ENCODE measurements at regions of chr20 and their contacts with region 1.

Region 1: DNA sequence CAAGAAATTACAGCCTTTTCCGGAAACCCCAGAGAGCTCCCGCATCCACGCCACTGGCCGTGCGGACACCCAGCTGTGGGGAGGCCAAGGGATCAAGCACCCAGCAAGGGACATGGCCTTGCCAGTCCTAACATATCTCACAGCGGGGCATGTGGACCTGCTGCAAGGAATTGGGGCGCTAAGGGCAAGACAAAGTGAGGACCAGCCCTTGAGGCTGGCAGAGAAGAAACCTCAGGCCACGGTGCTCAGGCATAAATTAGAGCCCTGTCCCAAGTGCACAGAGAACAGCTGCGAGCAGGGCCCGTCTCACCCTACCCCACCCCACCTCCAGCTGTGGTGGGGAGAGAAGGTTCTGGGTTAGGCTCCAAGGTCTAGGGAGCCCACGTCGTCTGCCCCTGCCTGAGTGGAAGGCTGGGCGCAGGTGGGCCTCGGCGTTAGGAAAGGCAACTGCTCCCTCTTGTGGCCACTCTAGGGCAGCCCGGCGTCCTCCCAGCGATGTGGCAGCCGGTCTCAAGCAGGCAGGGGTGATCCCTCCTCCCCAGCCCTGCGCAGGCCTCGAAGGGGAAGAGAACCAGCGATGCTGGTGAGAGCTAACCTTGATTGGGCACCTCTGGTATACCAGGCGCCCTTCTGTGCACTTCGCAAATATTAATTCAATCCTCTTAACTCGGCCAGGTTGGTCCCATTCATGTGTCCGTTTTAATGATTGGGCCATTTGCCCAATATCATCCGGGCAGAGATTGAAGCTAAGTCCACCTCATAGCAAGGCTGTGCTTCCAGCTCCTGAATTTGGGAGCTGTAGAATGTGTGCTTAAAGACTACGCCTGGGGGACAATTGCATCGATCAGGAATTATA is 235.8 kb downstream of the NFATC2 start:
- DNase-seq: peak; percentile 38 to 91 (median 76)
- ATAC-seq: peak; percentile 92 to 98 (median 98)
- H3K4me3 ChIP-seq: no peak overlapping the region
- H3K27ac ChIP-seq: no peak overlapping the region
- H3K4me1 ChIP-seq: no peaks in the 10 kb centered on the region
- H3K27me3 ChIP-seq: no peaks in the 10 kb centered on the region
- CTCF ChIP-seq: peak; percentile 84 to 93 (median 90)

Region 2: DNA sequence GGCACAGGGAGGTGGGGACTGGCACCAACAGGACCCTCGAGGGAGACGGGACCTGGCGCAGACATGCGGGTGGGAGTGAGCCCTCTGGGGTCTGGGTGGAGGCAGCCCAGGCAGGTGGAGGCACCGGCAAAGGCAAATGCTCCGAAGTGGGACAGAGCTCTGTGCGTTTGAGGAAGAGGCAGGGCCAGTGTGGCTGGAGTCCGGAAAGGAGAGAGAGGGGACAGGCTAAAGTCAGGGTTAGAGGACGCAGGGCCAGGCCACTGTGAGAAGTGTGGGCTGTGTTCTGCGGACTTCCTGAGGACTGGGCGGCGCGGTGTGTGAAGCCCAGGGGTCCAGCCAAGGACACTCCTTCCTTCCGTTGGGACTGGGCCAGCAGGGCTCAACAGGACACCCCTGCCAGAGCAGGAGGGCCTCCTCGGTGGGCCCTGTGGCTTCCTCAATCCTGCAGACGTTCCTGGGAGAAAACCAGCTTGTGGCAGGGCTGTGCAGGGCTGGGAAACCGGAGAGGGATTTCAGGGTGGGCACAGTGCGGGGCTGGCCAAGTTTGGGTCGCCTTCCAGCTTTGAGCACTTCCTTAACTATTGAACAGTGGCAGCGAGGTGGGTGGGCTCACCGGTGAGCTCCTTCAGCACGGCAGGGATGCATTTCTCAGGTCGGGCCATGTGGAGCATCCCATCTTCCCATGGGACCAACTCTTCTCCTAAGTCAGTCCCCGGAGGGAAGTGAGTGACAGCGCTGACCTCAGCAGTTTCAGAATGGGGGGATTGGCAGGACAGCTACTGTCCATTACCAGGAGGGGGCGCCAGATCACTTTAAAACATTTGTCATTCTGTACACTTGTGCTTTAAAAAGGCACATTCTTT is 325.6 kb before region 1 on chr20:
- intact Hi-C with region 1: loop called in 1 of 3 experiments (anchors 5 kb)
- DNase-seq: peak in 5 of 6 donors; percentile 16 to 65 (median 47)
- ATAC-seq: peak; percentile 28 to 77 (median 66)
- H3K4me3 ChIP-seq: no peak overlapping the region
- H3K27ac ChIP-seq: no peak overlapping the region
- H3K4me1 ChIP-seq: no peaks in the 10 kb centered on the region
- H3K27me3 ChIP-seq: no peaks in the 10 kb centered on the region
- CTCF ChIP-seq: peak; percentile 56 to 85 (median 64)

Region 3: DNA sequence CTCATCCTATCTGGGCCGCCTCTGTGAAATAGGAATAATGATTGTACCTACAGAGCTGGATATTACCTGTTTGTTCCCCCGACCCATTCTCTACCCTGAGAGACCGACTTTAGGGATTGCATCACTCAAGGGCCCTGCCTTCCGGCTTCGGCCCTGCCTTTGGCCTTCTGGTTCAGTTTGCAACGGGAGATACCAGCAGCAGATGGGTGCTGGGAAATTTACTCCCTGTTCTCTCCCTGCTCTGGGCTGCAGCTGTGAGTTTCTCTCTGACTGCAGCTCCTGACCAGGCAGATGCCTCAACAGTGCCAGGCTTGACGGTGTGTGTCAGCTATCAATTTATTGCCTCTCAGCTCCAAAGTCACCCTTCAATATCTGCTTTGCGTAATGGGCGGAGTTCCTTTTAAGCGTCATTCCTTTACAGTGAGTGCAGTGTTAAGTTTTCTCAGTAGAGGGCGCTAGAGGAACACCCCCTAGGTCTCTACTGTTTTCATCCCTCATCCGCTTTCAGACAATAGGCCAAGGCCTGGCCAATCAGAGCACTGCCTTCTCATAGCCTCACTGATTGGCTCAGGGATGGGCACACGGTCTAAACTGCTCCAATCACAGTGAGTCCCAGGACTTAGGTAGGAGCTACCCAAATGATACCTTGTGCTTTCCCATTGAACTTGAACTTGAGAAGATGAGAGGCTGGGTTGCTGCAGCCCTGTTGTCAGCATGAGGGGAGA is 313.8 kb before region 1 on chr20:
- intact Hi-C with region 1: loop called in 1 of 3 experiments (anchors 5 kb)
- DNase-seq: no peak
- ATAC-seq: peak in 3 of 4 donors; percentile 41 to 68 (median 49)
- H3K4me3 ChIP-seq: no peak overlapping the region
- H3K27ac ChIP-seq: no peak overlapping the region
- H3K4me1 ChIP-seq: no peaks in the 10 kb centered on the region
- H3K27me3 ChIP-seq: no peaks in the 10 kb centered on the region
- CTCF ChIP-seq: peak in 1 of 4 donors; percentile 16

Measured in pancreas (tissue), 10 donors.